Stomach (tissue), 19 donors: ENCODE measurements at regions of chr15 and their contacts with region 1.

Region 1: GRCh38 chr15:88476635-88477060 is 9.1 kb downstream of the MRPS11 start:
- DNase-seq: peak; percentile 45 to 71
- H3K4me3 ChIP-seq: no peak overlapping the region
- H3K27ac ChIP-seq: peak overlapping the region in 1 of 5 donors; percentile 31
- H3K4me1 ChIP-seq: peaks cover 0 to 22% (median 8%) of the 10 kb centered on the region in 4 donors
- H3K27me3 ChIP-seq: no peaks in the 10 kb centered on the region
- CTCF ChIP-seq: peak in 4 of 7 experiments; percentile 21 to 65 (median 50)
- EP300 ChIP-seq: no peak
- POLR2A ChIP-seq: no peak

Region 2: GRCh38 chr15:88202231-88202630 is 274.4 kb before region 1 on chr15:
- intact Hi-C with region 1: no loop called
- DNase-seq: no peak
- H3K4me3 ChIP-seq: no peak overlapping the region
- H3K27ac ChIP-seq: no peak overlapping the region
- H3K4me1 ChIP-seq: no peaks in the 10 kb centered on the region
- H3K27me3 ChIP-seq: peaks cover 0 to 8% (median 0%) of the 10 kb centered on the region in 3 donors
- CTCF ChIP-seq: no peak
- EP300 ChIP-seq: no peak
- POLR2A ChIP-seq: no peak

Region 3: DNA sequence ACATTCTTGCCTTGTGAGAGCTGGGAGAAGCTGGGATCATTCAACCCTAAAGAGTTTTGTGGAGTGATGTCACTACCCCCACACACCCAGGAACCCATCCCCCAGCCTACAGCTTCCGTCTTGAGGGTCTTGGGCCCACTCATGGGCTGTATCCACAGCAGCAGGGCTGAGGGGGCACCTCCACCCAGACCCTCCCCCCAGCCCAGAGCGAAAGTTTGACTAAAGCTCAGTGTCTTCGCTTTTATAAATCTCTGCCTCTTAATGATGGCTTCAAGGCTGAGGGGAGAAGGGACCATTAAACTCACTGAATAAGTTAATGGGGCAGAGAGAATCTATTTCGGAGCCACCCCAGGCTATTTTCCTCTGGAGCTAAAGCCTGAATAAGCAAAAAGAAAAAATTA is 243.8 kb before region 1 on chr15:
- intact Hi-C with region 1: no loop called
- DNase-seq: no peak
- H3K4me3 ChIP-seq: no peak overlapping the region
- H3K27ac ChIP-seq: no peak overlapping the region
- H3K4me1 ChIP-seq: no peaks in the 10 kb centered on the region
- H3K27me3 ChIP-seq: peaks cover 0 to 21% (median 0%) of the 10 kb centered on the region in 3 donors
- CTCF ChIP-seq: no peak
- EP300 ChIP-seq: no peak
- POLR2A ChIP-seq: no peak

Region 4: GRCh38 chr15:88610701-88611231 is 134.1 kb after region 1 on chr15:
- intact Hi-C with region 1: loop called (anchors 10 kb)
- DNase-seq: no peak
- H3K4me3 ChIP-seq: no peak overlapping the region
- H3K27ac ChIP-seq: no peak overlapping the region
- H3K4me1 ChIP-seq: peaks cover 0 to 20% (median 16%) of the 10 kb centered on the region in 4 donors
- H3K27me3 ChIP-seq: peaks cover 8 to 46% (median 20%) of the 10 kb centered on the region in 3 donors
- CTCF ChIP-seq: no peak
- EP300 ChIP-seq: no peak
- POLR2A ChIP-seq: no peak